Posterior cingulate gyrus (tissue), 11 donors: ENCODE measurements at regions of chr4 and their contacts with region 1.

Region 1: DNA sequence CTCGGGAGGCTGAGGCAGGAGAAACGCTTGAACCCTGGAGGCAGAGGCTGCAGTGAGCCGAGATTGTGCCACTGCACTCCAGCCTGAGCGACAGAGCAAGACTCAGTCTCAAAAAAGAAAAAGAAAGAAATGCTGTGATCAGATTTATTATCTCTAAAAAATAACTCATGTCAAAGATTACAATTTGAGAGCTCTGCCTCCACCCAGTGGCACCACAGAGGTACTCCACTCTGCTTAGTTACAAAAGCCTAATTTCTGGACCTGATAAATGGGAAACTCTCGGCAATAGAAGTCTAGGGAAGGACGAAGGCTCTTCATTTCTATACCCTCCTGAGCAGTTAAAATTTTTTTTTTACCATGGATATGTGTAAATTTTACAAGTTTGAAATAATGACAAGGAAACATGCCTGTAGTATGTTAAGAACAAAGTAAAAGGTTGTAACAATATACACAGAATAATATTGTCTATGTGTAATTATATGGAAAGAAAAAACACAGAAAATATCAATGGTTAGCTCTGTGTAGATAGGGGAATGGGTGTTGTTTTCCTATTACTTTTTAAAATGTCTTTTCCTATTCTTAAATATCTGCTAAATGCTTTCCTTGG is 149.8 kb downstream of the STIM2 start:
- DNase-seq: peak in 9 of 10 donors; percentile 39 to 92 (median 65)

Region 2: GRCh38 chr4:26330186-26330787 is 680.1 kb before region 1 on chr4:
- intact Hi-C with region 1: loop called (anchors 10 kb)
- DNase-seq: no peak

Region 3: DNA sequence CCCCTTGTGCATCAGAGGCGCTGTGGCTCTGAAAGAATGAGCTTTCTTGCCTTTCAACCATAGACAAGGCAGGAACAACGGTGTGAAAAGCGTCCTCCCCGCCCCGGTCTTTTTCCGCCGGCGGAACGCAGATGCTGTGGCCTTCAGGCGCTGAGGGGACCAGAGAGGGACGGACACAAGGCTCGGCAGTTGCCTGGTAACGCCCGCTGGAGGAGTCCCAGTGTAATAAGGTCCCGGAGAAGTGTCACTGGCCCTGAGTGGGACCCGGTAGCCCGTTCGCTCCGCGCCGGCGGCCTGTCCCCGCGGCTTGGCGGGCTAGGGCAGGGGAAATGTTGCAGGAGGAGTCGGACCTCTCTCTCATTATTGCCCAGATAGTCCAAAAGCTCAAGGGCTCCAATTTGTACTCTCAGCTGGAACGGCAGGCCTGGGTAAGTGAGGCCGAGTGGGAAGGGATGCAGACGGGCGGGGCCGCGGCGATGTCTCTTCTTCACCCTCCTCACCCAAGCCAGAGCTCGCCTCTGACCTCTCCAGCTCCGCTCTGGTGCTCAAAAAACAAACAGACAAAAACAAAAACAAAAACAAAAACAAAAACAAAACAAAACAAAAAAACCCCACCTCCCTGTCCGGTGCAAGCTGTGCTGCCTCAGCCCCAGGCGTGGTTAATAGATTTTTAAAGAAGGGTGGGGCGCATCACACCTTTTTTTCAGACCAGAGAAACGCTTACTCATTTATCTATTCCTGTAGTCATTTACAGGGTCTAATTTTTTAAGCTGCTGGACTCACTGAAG is 426.4 kb before region 1 on chr4 and contains the start of gene TBC1D19:
- intact Hi-C with region 1: loop called (anchors 10 kb)
- DNase-seq: peak; percentile 86 to 98 (median 89)